ENCODE measurements at regions of chr9 and their contacts with region 1.

Region 1: DNA sequence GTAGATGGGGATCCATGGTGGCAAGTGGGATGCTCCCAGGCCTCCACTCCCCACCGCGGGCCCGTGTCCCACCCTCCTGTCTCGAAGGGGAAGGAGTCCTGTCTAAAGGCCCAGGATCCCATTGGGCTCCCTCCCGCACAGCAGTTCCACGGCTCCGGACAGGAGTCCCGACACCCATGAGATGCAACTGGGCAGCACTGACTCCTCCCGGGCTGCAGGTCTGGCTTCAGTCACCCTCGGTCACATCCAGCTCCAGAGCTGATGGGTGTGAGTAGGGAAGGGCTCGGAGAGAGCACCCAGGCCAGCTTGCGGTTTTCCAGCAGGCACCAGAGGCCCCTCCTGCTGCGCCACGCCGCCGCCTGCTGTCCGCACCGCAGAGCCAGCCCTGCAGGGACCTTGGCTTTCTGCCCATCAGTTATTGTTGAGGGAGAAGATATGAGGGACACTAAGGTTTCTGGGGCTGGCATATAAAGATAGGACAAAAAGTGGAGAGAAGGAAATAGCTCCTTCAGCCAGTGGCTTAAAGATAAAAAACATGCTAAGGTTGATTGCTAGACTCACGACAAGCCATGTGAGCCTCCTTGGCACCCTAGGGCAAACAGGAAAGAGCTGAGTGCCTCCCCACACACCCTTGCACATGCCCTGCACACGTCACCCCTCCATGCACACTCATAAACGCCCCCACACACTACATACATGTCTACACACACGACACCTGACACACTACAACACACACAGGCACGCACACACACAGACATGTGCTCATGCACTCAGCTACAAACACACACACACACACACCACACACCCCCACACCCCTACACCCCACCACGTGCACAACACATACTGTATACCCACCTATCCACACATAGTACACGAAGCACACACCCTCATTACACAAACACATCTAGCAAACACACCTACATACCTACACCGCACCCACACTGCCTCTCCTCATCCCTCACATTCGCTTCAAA is 79.0 kb downstream of the AK8 start:
- DNase-seq: peak in 1 of 2 donors; percentile 68
- ATAC-seq: peak; percentile 45
- H3K4me3 ChIP-seq: no peak overlapping the region
- H3K27ac ChIP-seq: no peak overlapping the region
- H3K4me1 ChIP-seq: no peaks in the 10 kb centered on the region
- H3K27me3 ChIP-seq: no peaks in the 10 kb centered on the region

Region 2: GRCh38 chr9:132411091-132411508 is 388.0 kb before region 1 on chr9:
- intact Hi-C with region 1: loop called in 1 of 2 experiments (anchors 5 kb)
- DNase-seq: peak in 1 of 2 donors; percentile 78
- ATAC-seq: no peak
- H3K4me3 ChIP-seq: no peak overlapping the region
- H3K27ac ChIP-seq: no peak overlapping the region
- H3K4me1 ChIP-seq: no peaks in the 10 kb centered on the region
- H3K27me3 ChIP-seq: no peaks in the 10 kb centered on the region

Region 3: DNA sequence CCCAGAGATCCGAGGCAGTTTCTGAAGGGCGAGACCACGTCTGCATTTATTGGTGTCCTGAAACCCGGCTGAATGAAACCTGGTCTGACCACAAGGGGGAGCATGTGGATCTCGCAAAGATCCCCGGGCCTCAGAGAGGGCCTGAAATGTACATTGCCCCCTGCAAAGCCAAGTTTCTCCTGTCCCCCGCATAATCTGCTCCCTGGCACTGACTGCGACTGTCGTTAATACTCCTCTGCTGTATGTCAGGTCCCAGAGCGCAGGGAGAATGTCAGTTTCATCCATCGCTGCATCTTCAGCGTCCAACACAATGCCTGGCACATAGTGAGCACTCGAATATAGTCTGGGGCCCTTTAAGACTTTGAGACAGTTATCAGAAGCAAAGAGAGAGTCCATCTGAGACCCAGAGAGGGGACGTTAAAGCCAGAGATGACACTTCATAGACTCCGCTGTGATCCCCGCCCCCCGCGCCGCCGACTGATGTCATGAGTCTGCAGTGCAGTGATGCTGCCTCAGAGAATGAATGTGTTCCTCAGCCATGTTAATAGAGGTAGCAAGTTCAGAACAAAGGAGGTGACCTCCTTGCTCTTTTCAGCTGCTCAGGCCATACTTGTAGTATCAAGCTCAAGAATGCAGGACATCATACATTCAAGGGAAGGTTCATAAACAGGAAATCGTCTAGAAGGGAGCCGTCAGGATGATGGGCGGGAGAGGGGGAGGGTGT is 291.2 kb before region 1 on chr9:
- intact Hi-C with region 1: loop called (anchors 1 to 5 kb)
- DNase-seq: peak in 1 of 2 donors; percentile 65
- ATAC-seq: peak; percentile 58
- H3K4me3 ChIP-seq: no peak overlapping the region
- H3K27ac ChIP-seq: no peak overlapping the region
- H3K4me1 ChIP-seq: no peaks in the 10 kb centered on the region
- H3K27me3 ChIP-seq: peaks cover 0 to 2% of the 10 kb centered on the region in 2 donors